GM12878 (cell line): ENCODE measurements at regions of chr4 and their contacts with region 1.

Region 1: GRCh38 chr4:17347445-17347844 is 164.4 kb downstream of the QDPR start:
- DNase-seq: no peak
- ATAC-seq: peak; percentile 91
- H3K4me3 ChIP-seq: no peak overlapping the region
- H3K27ac ChIP-seq: no peak overlapping the region
- H3K4me1 ChIP-seq: no peaks in the 10 kb centered on the region
- H3K27me3 ChIP-seq: no peaks in the 10 kb centered on the region
- CTCF ChIP-seq: peak; percentile 55 to 65 (median 57); a peak in 5 of 6 replicates
- EP300 ChIP-seq: no peak
- POLR2A ChIP-seq: no peak
- RAD21 ChIP-seq: peak; percentile 74

Region 2: DNA sequence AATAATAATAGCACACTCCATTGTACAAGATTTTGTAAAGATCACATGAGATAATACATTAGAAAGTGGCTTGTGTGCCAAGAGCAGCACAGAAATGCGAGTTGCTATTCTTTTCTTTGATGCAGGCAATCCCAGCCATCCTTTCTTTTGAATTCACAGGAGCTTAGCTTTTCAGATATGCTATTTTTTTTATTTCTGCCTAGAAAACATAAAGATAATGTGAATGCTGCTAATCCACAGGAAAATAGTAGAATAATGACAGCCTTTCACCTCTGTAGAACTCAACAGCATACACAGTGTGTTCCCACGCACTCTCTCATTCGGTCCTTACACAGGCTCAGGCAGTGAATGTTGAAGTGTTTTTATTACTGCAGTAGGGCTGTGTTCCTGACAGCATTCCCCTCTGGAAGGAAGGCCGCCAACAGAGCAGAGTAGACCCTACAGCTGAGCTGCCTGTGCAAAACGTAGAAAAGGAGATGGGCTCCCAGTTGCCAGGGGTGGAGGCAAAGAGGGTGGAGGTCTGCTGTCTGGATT is 982.3 kb before region 1 on chr4:
- CTCF ChIA-PET with region 1: no interaction called
- POLR2A ChIA-PET with region 1: no interaction called
- RAD21 ChIA-PET with region 1: no interaction called
- SMC1A ChIA-PET with region 1: no interaction called
- in situ Hi-C with region 1: no loop called
- intact Hi-C with region 1: no loop called
- DNase-seq: no peak
- ATAC-seq: no peak
- H3K4me3 ChIP-seq: no peak overlapping the region
- H3K27ac ChIP-seq: no peak overlapping the region
- H3K4me1 ChIP-seq: no peaks in the 10 kb centered on the region
- H3K27me3 ChIP-seq: no peaks in the 10 kb centered on the region
- CTCF ChIP-seq: no peak
- EP300 ChIP-seq: no peak
- POLR2A ChIP-seq: no peak
- RAD21 ChIP-seq: no peak

Region 3: GRCh38 chr4:17293901-17294300 is 53.5 kb before region 1 on chr4:
- CTCF ChIA-PET with region 1: no interaction called
- POLR2A ChIA-PET with region 1: no interaction called
- RAD21 ChIA-PET with region 1: no interaction called
- SMC1A ChIA-PET with region 1: no interaction called
- in situ Hi-C with region 1: no loop called
- intact Hi-C with region 1: no loop called
- DNase-seq: no peak
- ATAC-seq: no peak
- H3K4me3 ChIP-seq: no peak overlapping the region
- H3K27ac ChIP-seq: no peak overlapping the region
- H3K4me1 ChIP-seq: no peaks in the 10 kb centered on the region
- H3K27me3 ChIP-seq: no peaks in the 10 kb centered on the region
- CTCF ChIP-seq: no peak
- EP300 ChIP-seq: no peak
- POLR2A ChIP-seq: no peak
- RAD21 ChIP-seq: no peak

Region 4: DNA sequence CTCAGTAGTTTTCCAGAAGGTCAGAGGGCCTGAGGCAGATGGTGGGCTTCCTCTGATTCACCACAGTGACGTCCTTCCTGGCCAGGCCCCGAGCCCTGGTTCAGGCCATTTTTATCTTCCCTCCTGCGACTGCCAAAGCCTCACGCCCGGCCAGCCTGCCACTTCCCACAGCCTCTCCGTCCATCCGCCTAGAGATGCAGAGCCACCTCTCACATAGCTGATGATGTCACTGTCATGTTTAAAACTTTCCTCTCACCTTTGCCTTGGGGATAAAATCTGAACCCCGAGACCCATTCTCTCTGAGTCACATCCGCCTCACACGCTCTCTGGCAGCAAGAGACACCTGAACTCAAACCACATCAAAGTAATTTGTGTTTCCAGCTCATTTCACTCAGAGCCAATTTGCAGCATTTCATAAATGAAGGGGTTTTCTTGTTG is 10.9 kb before region 1 on chr4:
- CTCF ChIA-PET with region 1: interaction called, 27 read pairs
- POLR2A ChIA-PET with region 1: interaction called, 3 read pairs
- RAD21 ChIA-PET with region 1: interaction called, 3 read pairs
- SMC1A ChIA-PET with region 1: interaction called, 18 read pairs
- in situ Hi-C with region 1: no loop called
- intact Hi-C with region 1: no loop called
- DNase-seq: peak; percentile 93
- ATAC-seq: peak; percentile 93
- H3K4me3 ChIP-seq: no peak overlapping the region
- H3K27ac ChIP-seq: no peak overlapping the region
- H3K4me1 ChIP-seq: peaks cover 8% of the 10 kb centered on the region
- H3K27me3 ChIP-seq: no peaks in the 10 kb centered on the region
- CTCF ChIP-seq: no peak
- EP300 ChIP-seq: peak; percentile 84 to 92
- POLR2A ChIP-seq: no peak
- RAD21 ChIP-seq: no peak

Region 5: DNA sequence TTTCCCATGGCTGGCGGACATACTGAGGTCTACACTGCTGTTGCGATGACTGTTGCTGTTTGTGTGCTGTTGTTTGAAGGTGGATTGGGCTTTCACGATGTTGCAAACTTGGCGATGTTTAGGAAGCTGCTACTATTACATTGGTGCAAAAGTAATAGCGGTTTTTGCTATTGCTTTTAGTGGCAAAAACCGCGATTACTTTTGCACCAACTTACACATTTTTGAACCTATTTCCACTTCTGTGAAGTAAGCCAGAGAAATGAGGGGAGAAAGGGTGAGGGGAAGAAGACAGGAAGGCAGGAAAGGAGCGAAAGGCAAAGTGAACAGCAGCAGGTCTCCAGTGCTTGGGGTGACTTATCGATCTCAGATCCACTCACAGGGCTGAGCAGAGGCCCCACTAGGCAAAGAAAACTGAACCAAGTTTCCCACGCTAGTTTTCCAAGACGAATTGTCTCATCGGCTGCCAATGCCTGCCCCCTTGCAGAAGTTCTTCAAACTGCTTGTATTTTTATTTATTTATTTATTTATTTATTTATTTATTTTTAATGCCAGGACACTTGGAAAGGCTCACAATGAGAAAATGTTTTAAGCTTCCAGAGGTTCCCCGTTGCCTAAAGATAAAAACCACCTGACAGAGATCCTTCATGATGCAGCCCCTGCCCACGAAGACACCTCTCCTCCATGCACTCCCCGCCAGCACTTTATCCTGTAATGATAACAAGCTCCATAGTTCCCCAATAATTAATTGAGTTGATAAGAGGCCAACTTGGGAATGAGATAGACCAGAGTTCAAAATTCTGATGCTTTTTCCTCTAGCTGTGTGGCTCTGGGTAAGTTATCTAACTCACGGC is 121.2 kb after region 1 on chr4:
- CTCF ChIA-PET with region 1: interaction called, 24 read pairs
- POLR2A ChIA-PET with region 1: no interaction called
- RAD21 ChIA-PET with region 1: interaction called, 18 read pairs
- SMC1A ChIA-PET with region 1: interaction called, 10 read pairs
- in situ Hi-C with region 1: loop called (anchors 5 kb)
- intact Hi-C with region 1: loop called (anchors 2 kb)
- DNase-seq: no peak
- ATAC-seq: no peak
- H3K4me3 ChIP-seq: no peak overlapping the region
- H3K27ac ChIP-seq: no peak overlapping the region
- H3K4me1 ChIP-seq: no peaks in the 10 kb centered on the region
- H3K27me3 ChIP-seq: no peaks in the 10 kb centered on the region
- CTCF ChIP-seq: peak in 2 of 3 experiments; percentile 25 to 35; a peak in 3 of 6 replicates
- EP300 ChIP-seq: no peak
- POLR2A ChIP-seq: no peak
- RAD21 ChIP-seq: peak; percentile 22; the same call in 1 of the 2 replicates